ENCODE measurements at regions of chr20 and their contacts with region 1.

Region 1: GRCh38 chr20:37345339-37346230 is at the start of gene SRC:
- DNase-seq: peak; percentile 95
- H3K4me3 ChIP-seq: peak within 1 kb of the TSS; percentile 72 to 91 (median 84)
- H3K27ac ChIP-seq: peak within 1 kb of the TSS; percentile 86 to 96 (median 92)
- H3K4me1 ChIP-seq: peaks cover 4 to 54% (median 43%) of the 10 kb centered on the region in 4 donors
- H3K27me3 ChIP-seq: peaks cover 0 to 10% (median 0%) of the 10 kb centered on the region in 4 donors
- CTCF ChIP-seq: no peak
- EP300 ChIP-seq: no peak
- POLR2A ChIP-seq: no peak
- total RNA-seq, gene SRC: 27.5 to 52.2 (median 42.3) TPM

Region 2: GRCh38 chr20:37133952-37134351 is 211.6 kb before region 1 on chr20:
- intact Hi-C with region 1: no loop called
- DNase-seq: no peak
- H3K4me3 ChIP-seq: no peak overlapping the region
- H3K27ac ChIP-seq: no peak overlapping the region
- H3K4me1 ChIP-seq: no peaks in the 10 kb centered on the region
- H3K27me3 ChIP-seq: no peaks in the 10 kb centered on the region
- CTCF ChIP-seq: no peak
- EP300 ChIP-seq: no peak
- POLR2A ChIP-seq: no peak

Region 3: DNA sequence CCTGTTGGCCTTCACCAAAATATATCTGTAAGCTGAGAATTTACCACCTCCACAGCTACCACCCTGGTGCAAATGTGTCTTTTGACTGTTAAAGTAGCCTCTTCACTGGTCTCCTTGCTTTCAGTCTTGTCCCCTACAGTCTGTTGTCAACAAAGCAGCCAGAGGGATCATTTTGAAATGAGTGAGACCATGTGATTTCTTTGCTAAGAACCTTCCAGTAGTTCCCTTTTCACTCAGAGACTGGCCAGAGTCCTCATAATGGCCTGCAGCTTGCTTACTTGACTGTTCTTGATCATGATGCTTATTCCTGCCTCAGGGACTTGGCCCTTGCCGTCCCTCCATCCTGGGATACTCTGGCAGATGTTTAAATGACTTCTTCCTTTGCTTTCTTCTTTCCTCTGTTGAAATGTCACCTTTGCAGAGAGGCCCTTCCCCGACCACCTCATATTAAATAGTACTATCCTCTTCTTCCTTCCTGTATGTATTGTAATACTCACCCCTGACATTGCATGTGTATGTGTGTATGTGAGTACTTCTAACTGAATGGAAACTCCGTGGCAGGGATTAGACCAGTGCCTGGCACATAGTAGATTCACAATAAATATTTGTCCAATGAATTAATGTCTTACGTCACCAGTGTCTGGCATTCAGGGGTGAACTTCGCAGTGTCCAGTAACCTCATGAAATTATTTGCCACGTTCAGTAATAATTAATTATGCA is 51.2 kb before region 1 on chr20:
- intact Hi-C with region 1: loop called (anchors 5 kb)
- DNase-seq: no peak
- H3K4me3 ChIP-seq: no peak overlapping the region
- H3K27ac ChIP-seq: peak overlapping the region; percentile 80 to 83 (median 80)
- H3K4me1 ChIP-seq: peaks cover 32 to 75% (median 71%) of the 10 kb centered on the region in 4 donors
- H3K27me3 ChIP-seq: no peaks in the 10 kb centered on the region
- CTCF ChIP-seq: no peak
- EP300 ChIP-seq: no peak
- POLR2A ChIP-seq: no peak

Region 4: GRCh38 chr20:37308086-37309050 is 37.2 kb before region 1 on chr20:
- intact Hi-C with region 1: loop called (anchors 5 kb)
- DNase-seq: no peak
- H3K4me3 ChIP-seq: no peak overlapping the region
- H3K27ac ChIP-seq: no peak overlapping the region
- H3K4me1 ChIP-seq: peaks cover 8 to 69% (median 40%) of the 10 kb centered on the region in 4 donors
- H3K27me3 ChIP-seq: no peaks in the 10 kb centered on the region
- CTCF ChIP-seq: no peak
- EP300 ChIP-seq: no peak
- POLR2A ChIP-seq: no peak

Measured in esophagus muscularis mucosa (tissue), 4 donors.